WTC11 (cell line): ENCODE measurements at regions of chr11 and their contacts with region 1.

Region 1: GRCh38 chr11:46308631-46309419 is 31.4 kb downstream of the CREB3L1 start:
- DNase-seq: peak; percentile 87
- ATAC-seq: peak; percentile 85
- H3K4me3 Mint-ChIP-seq: no peak overlapping the region
- H3K27ac Mint-ChIP-seq: 0 out of 2 replicates have a peak overlapping the region, but pooled peaks have one; percentile 27
- H3K4me1 Mint-ChIP-seq: peaks cover 19% of the 10 kb centered on the region
- H3K27me3 Mint-ChIP-seq: no peaks in the 10 kb centered on the region; the same call in 1 of the 2 replicates
- CTCF ChIP-seq: peak; percentile 85

Region 2: GRCh38 chr11:46072172-46072964 is 236.5 kb before region 1 on chr11:
- CTCF ChIA-PET with region 1: no interaction called
- POLR2A ChIA-PET with region 1: no interaction called
- DNase-seq: no peak
- ATAC-seq: no peak
- H3K4me3 Mint-ChIP-seq: no peak overlapping the region
- H3K27ac Mint-ChIP-seq: peak overlapping the region; percentile 7
- H3K4me1 Mint-ChIP-seq: peaks cover 11% of the 10 kb centered on the region
- H3K27me3 Mint-ChIP-seq: no peaks in the 10 kb centered on the region
- CTCF ChIP-seq: no peak

Region 3: GRCh38 chr11:46176402-46176801 is 132.4 kb before region 1 on chr11:
- CTCF ChIA-PET with region 1: no interaction called
- POLR2A ChIA-PET with region 1: no interaction called
- DNase-seq: no peak
- ATAC-seq: no peak
- H3K4me3 Mint-ChIP-seq: no peak overlapping the region
- H3K27ac Mint-ChIP-seq: no peak overlapping the region
- H3K4me1 Mint-ChIP-seq: no peaks in the 10 kb centered on the region
- H3K27me3 Mint-ChIP-seq: no peaks in the 10 kb centered on the region; the same call in 1 of the 2 replicates
- CTCF ChIP-seq: no peak

Region 4: DNA sequence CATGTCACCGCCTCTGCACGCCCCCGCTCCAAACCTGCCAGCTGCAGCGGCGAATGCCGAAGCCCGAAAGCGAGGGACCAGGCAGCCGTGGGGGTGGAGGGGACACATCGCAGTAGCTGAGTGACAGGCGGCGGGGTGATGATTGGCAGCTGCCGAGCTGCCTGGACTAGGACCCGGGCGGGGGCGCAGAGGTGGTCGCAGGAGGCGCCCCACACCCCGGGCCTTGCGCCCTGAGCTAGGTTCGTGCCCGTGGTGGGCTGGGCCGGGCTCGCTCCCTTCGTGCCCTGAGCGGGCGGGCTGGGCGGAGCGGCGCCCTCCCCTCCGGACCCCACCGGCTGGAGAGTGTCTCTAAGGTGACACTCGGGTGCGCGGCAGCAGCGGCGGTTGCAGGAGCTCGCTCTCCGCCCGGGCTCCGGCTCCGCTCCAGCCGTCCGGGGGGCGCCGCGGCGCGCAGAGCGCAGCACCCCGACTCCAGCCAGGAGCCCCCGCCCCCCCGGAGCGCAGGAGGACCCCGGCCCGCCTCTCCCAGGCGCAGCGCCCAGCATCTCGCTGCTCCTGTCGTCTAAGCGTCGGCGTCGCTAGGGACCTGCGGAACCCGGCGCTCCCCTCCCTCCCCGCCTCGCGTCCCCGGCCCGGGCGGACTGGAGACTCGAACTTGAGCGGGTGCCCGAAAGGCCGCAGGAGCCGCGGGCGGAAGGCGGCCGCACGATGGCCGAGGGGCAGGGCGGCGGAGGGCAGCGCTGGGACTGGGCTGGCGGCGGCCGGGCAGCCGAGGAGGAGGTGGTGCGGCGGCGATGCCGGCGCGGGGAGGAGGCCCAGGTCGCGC is 24.0 kb after region 1 on chr11:
- CTCF ChIA-PET with region 1: interaction called, 26 read pairs
- POLR2A ChIA-PET with region 1: no interaction called
- DNase-seq: peak; percentile 55
- ATAC-seq: peak; percentile 54
- H3K4me3 Mint-ChIP-seq: peak overlapping the region; percentile 69
- H3K27ac Mint-ChIP-seq: no peak overlapping the region
- H3K4me1 Mint-ChIP-seq: peaks cover 67% of the 10 kb centered on the region
- H3K27me3 Mint-ChIP-seq: peaks cover 56% of the 10 kb centered on the region
- CTCF ChIP-seq: no peak